Vagina (tissue), 2 donors: ENCODE measurements at regions of chr16 and their contacts with region 1.

Region 1: DNA sequence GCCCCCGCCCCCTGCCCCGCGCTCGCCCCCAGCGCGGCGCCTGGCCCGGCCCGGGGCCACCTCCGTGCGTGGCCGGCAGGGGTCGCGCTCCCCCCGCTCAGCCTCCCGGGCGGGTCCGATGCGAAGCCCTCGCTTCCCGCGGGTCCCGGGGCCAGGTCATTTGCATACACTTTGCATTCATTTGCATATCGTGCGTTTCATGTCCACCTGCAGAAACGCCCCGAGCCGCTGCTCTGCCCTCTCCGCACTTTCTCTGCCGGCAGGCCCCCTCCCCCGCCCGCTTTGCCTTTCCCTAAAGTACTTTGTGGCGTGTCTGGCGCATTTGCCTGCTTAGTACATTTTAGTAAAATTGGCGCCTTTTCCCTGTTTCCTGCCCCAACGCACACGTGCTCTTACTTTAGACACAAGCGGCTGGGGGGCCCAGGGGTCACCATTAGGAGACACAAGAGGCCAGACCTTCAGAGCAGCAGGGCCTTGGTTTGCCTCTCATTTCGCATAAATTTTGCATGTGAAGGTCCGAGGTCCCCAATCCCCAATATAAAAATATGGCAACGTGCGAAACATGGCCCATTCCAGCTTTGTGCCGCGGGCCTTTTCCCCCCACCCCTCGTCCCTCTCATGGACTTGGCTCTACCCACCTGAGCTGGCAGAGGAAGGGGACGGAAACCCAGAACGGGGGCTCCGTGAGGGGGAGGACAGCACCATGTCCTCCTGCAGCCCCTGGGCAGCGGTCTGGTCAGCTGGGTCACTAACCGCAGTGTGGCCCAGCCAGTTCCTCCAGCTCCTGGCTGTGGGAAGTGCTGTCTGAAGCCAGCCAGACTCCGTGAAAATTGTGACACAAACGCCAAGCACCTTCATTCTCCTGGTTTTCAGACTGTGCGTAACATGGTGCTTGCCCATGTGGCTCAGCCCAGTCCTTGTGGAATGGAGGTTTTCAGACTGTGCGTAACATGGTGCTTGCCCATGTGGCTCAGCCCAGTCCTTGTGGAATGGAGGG is 34.8 kb downstream of the CBFA2T3 start:
- DNase-seq: no peak
- H3K4me3 ChIP-seq: peak overlapping the region; percentile 39 to 45
- H3K27ac ChIP-seq: no peak overlapping the region
- H3K4me1 ChIP-seq: peaks cover 40% of the 10 kb centered on the region
- H3K27me3 ChIP-seq: no peaks in the 10 kb centered on the region
- CTCF ChIP-seq: peak; percentile 34 to 46 (median 43)
- POLR2A ChIP-seq: no peak

Region 2: DNA sequence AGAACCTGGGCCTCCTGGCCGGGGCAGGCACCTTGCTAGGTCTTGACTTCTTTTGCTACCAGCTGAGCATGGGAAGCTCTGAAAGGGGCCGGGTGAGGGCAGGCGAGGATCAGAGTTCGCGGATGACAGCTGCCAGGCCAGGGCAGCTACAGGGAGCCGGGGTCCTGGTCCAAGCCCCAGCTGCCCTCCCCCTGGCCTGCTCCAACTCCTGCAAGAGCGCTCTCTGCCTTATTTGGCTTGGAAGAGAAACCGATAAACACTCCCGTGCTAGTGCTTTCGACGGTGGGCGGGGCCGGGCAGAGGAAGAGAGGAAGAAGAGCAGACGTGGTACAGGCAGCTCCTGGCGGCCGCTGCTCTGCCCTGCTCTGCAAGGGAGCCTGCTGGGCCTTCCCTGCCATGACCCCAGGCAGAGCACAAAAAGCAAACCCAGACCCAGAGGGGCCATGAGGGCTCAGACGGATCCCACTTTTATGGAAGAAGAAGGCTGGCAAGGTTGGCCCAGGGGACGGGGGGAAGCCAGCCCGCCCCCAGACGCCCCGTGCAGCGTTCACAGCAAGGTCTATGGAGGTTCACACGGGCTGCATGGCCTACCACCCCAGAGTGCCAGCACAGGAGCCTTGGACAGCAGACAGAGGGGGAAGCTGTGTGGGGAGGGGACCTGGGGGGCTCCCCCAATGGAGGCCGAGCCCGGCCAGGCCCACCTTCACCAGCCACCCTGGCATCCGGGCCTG is 182.8 kb before region 1 on chr16:
- intact Hi-C with region 1: no loop called
- DNase-seq: no peak
- H3K4me3 ChIP-seq: no peak overlapping the region
- H3K27ac ChIP-seq: peak overlapping the region; percentile 20
- H3K4me1 ChIP-seq: peaks cover 82% of the 10 kb centered on the region
- H3K27me3 ChIP-seq: no peaks in the 10 kb centered on the region
- CTCF ChIP-seq: no peak
- POLR2A ChIP-seq: no peak

Region 3: DNA sequence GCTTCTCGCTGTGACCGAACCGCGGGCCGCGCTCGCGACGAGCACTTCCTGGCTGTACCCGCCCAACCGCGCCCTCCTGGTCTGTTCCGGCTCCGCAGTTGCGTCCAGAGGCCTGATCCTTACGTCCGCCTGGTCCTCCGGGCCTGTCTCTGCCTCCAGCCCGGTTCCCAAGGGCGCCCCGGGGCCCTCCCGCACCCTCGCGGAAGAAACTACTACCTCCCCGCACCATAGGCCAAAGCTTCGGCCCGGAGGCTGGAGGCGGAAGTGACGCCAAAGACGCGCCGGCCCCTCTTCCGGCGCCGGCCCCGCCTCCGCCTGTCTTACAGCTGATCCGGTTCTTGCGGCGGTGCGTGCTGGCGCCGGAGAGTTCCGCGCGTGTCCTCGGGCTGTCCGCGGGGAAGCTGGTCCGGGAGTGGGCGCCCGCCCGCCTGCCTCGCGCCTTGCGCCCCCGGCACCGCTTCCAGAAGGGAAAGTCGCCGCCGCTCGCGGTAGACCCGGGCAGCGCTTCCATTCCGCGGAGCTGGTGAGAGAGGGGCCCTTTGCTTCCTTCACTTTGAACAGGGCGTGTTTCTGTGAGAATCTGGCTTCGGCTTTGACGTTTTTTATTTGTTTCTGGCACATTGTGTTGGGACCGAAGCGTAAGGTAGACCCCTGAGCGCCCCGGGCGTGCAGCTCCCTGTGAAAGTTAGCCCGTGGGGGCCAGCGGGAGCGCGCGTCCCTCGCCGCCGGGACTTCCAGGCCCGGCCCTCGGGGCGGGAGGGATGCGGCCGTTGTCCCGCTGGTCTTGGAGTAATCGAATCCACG is 275.4 kb after region 1 on chr16 and contains the start of gene ZNF778:
- intact Hi-C with region 1: loop called (anchors 10 kb)
- DNase-seq: no peak
- H3K4me3 ChIP-seq: peak within 1 kb of the TSS; percentile 66 to 71
- H3K27ac ChIP-seq: peak within 1 kb of the TSS; percentile 93
- H3K4me1 ChIP-seq: peaks cover 35% of the 10 kb centered on the region
- H3K27me3 ChIP-seq: no peaks in the 10 kb centered on the region
- CTCF ChIP-seq: peak in 1 of 3 experiments; percentile 12
- POLR2A ChIP-seq: peak in 1 of 2 donors; percentile 66
- total RNA-seq, gene ZNF778: 6.6 TPM

Region 4: DNA sequence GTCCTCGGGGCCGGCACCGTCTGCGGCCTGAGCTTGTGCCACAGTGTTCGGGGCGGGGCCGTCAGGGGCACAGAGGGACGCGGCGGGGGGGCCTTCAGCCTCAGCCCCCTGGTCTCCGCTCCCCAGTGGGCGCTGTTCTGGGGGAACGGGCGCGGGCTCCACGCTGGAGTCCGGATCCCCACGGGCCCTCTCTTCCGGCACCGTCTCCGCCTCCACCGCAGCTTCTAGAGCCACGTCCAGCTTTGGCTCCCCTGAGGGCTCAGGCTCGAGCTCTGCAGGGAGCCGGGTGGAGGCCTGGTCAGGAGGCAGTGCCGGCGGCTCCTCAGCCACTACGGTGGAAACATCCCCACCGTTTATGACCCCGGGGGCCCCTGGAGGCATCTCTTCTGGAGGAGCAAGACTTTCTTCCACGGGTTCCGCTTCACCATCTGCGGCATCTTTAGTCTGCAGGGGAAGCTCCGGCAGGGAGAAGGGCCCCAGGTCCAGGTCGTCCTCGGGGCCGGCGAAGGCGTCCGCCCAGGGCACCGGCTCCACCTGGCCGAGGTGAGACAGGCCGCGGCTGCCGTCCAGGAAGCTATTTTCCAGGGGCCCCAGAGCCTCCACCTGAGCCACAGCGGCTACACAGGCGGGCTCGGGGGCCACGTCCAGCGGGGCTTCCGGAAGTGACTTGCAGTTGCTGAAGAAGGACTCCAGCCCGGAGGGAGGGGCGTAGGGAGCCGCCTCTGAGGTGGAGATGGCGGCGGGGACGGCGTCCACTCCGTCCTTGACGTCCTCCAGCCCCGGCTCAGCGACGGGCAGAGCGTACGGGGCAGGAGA is 337.7 kb after region 1 on chr16:
- intact Hi-C with region 1: no loop called
- DNase-seq: no peak
- H3K4me3 ChIP-seq: no peak overlapping the region
- H3K27ac ChIP-seq: no peak overlapping the region
- H3K4me1 ChIP-seq: no peaks in the 10 kb centered on the region
- H3K27me3 ChIP-seq: no peaks in the 10 kb centered on the region
- CTCF ChIP-seq: no peak
- POLR2A ChIP-seq: no peak